Ovary (tissue), 10 donors: ENCODE measurements at regions of chr14 and their contacts with region 1.

Region 1: DNA sequence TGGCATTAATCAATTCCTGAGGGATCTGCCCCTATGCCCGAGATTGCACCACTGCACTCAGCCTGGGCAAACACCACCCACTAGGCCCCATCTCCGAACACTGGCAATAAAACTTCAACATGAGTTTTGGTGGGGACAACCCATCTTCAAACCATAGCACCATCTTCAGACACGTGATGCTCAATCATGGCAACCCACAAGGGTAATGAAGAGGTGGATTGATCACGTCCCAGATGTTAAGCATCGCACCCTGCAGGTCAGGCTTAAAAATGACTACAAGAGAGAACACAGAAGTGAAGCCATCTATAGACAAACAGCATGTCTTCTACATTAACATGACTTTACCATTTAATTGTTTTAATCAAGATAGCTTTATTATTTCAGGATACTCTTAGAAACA is 42.8 kb upstream of the DDHD1 start:
- DNase-seq: no peak
- H3K4me3 ChIP-seq: no peak overlapping the region
- H3K27ac ChIP-seq: no peak overlapping the region
- H3K4me1 ChIP-seq: no peaks in the 10 kb centered on the region
- H3K27me3 ChIP-seq: no peaks in the 10 kb centered on the region
- CTCF ChIP-seq: no peak
- EP300 ChIP-seq: no peak
- POLR2A ChIP-seq: no peak

Region 2: DNA sequence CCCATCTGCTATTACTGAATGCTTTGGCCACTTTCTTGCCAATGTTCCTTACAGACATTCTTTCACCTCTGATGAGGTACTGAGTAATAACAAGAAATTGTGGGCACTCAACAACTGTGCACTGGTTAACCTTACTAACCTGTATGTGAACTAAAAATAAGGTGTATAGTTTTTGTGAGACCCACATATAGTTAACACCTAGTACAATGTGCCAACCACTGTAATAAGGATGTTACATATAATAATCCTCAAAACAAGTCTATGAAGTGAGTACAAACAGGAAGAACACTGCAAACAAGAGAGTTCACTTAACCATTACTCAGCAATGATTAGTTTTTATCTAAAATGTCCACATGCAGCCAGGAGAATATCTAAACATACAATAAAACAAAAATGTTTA is 47.3 kb before region 1 on chr14:
- intact Hi-C with region 1: loop called in 1 of 4 experiments (anchors 1 kb)
- DNase-seq: no peak
- H3K4me3 ChIP-seq: no peak overlapping the region
- H3K27ac ChIP-seq: no peak overlapping the region
- H3K4me1 ChIP-seq: peaks cover 5% of the 10 kb centered on the region
- H3K27me3 ChIP-seq: no peaks in the 10 kb centered on the region
- CTCF ChIP-seq: no peak
- EP300 ChIP-seq: no peak
- POLR2A ChIP-seq: no peak

Region 3: DNA sequence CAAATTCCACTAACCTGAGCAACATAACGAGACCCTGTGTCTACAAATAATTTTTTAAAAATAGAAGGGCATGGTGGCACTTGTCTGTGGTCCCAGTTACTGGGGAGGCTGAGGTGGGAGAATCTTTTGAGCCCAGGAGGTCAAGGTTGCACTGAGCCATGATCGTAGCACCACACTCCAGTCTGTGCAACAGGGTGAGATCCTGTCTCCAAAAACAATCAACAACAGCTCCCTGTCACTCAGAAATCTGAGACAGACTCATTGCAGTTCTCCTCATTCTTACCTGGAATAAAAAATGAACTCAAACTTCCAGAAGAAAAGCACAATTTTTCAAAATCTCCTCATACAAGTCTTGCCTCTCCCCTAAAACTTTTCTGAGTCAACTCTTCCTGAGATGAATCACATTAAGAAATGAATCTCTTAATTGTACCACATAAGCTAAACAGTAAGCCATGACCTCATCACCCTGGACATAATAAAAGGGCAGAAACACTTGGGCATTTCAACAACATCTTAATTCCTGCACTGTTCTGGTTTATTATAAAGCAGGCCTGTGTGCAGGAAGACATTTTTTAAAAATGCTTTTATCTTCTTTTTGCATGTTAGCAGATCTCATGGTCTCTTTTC is 986.6 kb after region 1 on chr14:
- intact Hi-C with region 1: no loop called
- DNase-seq: no peak
- H3K4me3 ChIP-seq: no peak overlapping the region
- H3K27ac ChIP-seq: no peak overlapping the region
- H3K4me1 ChIP-seq: no peaks in the 10 kb centered on the region
- H3K27me3 ChIP-seq: no peaks in the 10 kb centered on the region
- CTCF ChIP-seq: no peak
- EP300 ChIP-seq: no peak
- POLR2A ChIP-seq: no peak